Activated B cell treated with CpG ODN at 0.5 μM for 24 hours (primary cell): ENCODE measurements at regions of chr14 and their contacts with region 1.

Region 1: DNA sequence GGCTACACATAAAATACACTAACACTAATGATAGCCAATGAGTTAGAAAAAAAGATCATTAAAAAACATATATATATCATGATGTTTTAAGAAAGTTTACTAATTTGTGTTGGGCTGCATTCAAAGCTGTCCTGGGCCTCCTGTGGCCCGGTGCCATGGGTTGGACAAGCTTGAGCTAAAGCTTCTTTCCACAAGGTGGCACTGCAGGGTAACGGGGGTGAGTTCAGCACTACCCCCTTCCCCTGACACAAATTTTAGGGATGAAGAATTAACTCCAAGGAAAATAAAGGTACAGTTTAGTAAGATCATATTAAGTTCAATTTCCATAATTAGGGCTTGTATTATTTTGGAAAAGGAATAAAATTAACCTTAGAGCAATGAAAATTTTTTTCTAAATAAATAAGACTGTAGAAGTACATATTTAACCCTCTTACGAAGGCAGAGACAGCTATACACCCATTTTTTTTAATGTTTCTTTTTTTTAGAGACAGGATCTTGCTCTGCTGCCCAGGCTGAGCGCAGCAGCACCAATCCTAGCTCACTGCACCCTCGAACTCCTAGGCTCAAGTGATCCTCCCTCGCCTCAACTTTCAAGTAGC is 38.9 kb downstream of the PPP1R13B start:
- DNase-seq: no peak
- ATAC-seq: peak; percentile 69
- H3K4me3 Mint-ChIP-seq: no peak overlapping the region
- H3K27ac Mint-ChIP-seq: no peak overlapping the region
- H3K4me1 Mint-ChIP-seq: peaks cover 21% of the 10 kb centered on the region
- H3K27me3 Mint-ChIP-seq: no peaks in the 10 kb centered on the region
- CTCF ChIP-seq: peak; percentile 55

Region 2: GRCh38 chr14:103576371-103577024 is 232.0 kb before region 1 on chr14:
- CTCF ChIA-PET with region 1: no interaction called
- POLR2A ChIA-PET with region 1: no interaction called
- intact Hi-C with region 1: loop called (anchors 1 kb)
- DNase-seq: no peak
- ATAC-seq: no peak
- H3K4me3 Mint-ChIP-seq: no peak overlapping the region
- H3K27ac Mint-ChIP-seq: no peak overlapping the region
- H3K4me1 Mint-ChIP-seq: no peaks in the 10 kb centered on the region
- H3K27me3 Mint-ChIP-seq: no peaks in the 10 kb centered on the region
- CTCF ChIP-seq: no peak

Region 3: DNA sequence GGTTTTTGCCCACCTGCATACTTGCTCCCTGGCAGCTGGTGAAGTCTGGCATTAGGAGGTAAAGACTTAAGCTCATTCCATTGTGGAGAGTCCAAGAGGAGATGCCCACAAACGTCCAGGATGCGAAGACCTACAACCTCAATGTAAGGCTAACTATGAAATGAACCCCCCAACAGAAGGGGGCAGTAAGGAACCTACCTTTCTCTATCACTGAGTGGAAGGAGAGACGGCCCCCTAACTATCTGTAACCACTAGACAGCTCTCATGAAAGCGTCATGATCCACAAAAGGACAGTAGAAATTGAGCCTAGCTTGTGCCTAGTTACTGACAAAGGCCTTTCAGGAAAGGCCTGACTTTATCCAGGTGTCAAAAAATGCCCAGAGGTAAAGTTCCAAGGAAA is 37.6 kb before region 1 on chr14:
- CTCF ChIA-PET with region 1: no interaction called
- POLR2A ChIA-PET with region 1: no interaction called
- intact Hi-C with region 1: no loop called
- DNase-seq: no peak
- ATAC-seq: no peak
- H3K4me3 Mint-ChIP-seq: no peak overlapping the region
- H3K27ac Mint-ChIP-seq: no peak overlapping the region
- H3K4me1 Mint-ChIP-seq: no peaks in the 10 kb centered on the region
- H3K27me3 Mint-ChIP-seq: no peaks in the 10 kb centered on the region
- CTCF ChIP-seq: no peak

Region 4: GRCh38 chr14:103836976-103837725 is 28.6 kb after region 1 on chr14:
- CTCF ChIA-PET with region 1: no interaction called
- POLR2A ChIA-PET with region 1: no interaction called
- intact Hi-C with region 1: no loop called
- DNase-seq: no peak
- ATAC-seq: no peak
- H3K4me3 Mint-ChIP-seq: no peak overlapping the region
- H3K27ac Mint-ChIP-seq: no peak overlapping the region
- H3K4me1 Mint-ChIP-seq: no peaks in the 10 kb centered on the region
- H3K27me3 Mint-ChIP-seq: no peaks in the 10 kb centered on the region
- CTCF ChIP-seq: no peak

Region 5: GRCh38 chr14:103910262-103910935 is 101.9 kb after region 1 on chr14:
- CTCF ChIA-PET with region 1: interaction called, 75 read pairs
- POLR2A ChIA-PET with region 1: no interaction called
- intact Hi-C with region 1: loop called (anchors 1 kb)
- DNase-seq: peak; percentile 30
- ATAC-seq: peak; percentile 79
- H3K4me3 Mint-ChIP-seq: peak overlapping the region; percentile 33
- H3K27ac Mint-ChIP-seq: no peak overlapping the region
- H3K4me1 Mint-ChIP-seq: peaks cover 7% of the 10 kb centered on the region
- H3K27me3 Mint-ChIP-seq: no peaks in the 10 kb centered on the region
- CTCF ChIP-seq: no peak

Region 6: GRCh38 chr14:104001003-104001402 is 192.5 kb after region 1 on chr14:
- CTCF ChIA-PET with region 1: interaction called, 8 read pairs
- POLR2A ChIA-PET with region 1: no interaction called
- intact Hi-C with region 1: loop called (anchors 1 kb)
- DNase-seq: no peak
- ATAC-seq: no peak
- H3K4me3 Mint-ChIP-seq: no peak overlapping the region
- H3K27ac Mint-ChIP-seq: no peak overlapping the region
- H3K4me1 Mint-ChIP-seq: no peaks in the 10 kb centered on the region
- H3K27me3 Mint-ChIP-seq: peaks cover 2% of the 10 kb centered on the region
- CTCF ChIP-seq: no peak

Region 7: GRCh38 chr14:104563742-104564615 is 755.5 kb after region 1 on chr14:
- CTCF ChIA-PET with region 1: interaction called, 3 read pairs
- POLR2A ChIA-PET with region 1: no interaction called
- intact Hi-C with region 1: loop called (anchors 5 kb)
- DNase-seq: peak; percentile 38
- ATAC-seq: peak; percentile 83
- H3K4me3 Mint-ChIP-seq: no peak overlapping the region
- H3K27ac Mint-ChIP-seq: no peak overlapping the region
- H3K4me1 Mint-ChIP-seq: peaks cover 5% of the 10 kb centered on the region
- H3K27me3 Mint-ChIP-seq: peaks cover 29% of the 10 kb centered on the region
- CTCF ChIP-seq: no peak